Adrenal gland (tissue), 19 donors: ENCODE measurements at regions of chr5 and their contacts with region 1.

Region 1: DNA sequence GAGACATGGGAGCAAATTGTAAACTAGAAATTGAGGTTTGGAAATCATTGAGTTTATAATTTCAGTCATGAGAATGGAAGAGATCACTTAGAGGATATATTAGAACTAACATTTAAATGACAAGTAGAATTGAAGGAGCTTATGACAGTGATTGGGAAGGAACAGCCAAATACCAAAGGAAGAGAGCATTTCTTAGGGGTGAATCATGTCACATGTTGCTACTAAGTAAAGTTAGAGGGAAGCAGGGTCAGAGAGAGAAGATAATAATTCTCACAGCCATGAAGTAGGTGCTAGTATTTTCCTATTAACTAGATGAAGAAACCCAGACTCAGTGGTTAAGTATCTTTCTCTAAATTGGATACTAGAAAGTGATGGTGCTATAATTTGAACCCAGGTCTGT is 59.3 kb downstream of the COMMD10 start:
- DNase-seq: no peak
- H3K4me3 ChIP-seq: no peak overlapping the region
- H3K27ac ChIP-seq: no peak overlapping the region
- H3K4me1 ChIP-seq: no peaks in the 10 kb centered on the region
- H3K27me3 ChIP-seq: no peaks in the 10 kb centered on the region
- CTCF ChIP-seq: no peak
- POLR2A ChIP-seq: no peak

Region 2: GRCh38 chr5:115946655-115947054 is 197.4 kb before region 1 on chr5:
- intact Hi-C with region 1: no loop called
- DNase-seq: no peak
- H3K4me3 ChIP-seq: no peak overlapping the region
- H3K27ac ChIP-seq: no peak overlapping the region
- H3K4me1 ChIP-seq: no peaks in the 10 kb centered on the region
- H3K27me3 ChIP-seq: no peaks in the 10 kb centered on the region
- CTCF ChIP-seq: no peak
- POLR2A ChIP-seq: no peak

Region 3: GRCh38 chr5:116068028-116068632 is 76.0 kb before region 1 on chr5:
- intact Hi-C with region 1: no loop called
- DNase-seq: peak in 4 of 7 donors; percentile 39 to 69 (median 50)
- H3K4me3 ChIP-seq: no peak overlapping the region
- H3K27ac ChIP-seq: no peak overlapping the region
- H3K4me1 ChIP-seq: no peaks in the 10 kb centered on the region
- H3K27me3 ChIP-seq: peaks cover 6% of the 10 kb centered on the region
- CTCF ChIP-seq: peak; percentile 69 to 94 (median 84)
- POLR2A ChIP-seq: no peak

Region 4: DNA sequence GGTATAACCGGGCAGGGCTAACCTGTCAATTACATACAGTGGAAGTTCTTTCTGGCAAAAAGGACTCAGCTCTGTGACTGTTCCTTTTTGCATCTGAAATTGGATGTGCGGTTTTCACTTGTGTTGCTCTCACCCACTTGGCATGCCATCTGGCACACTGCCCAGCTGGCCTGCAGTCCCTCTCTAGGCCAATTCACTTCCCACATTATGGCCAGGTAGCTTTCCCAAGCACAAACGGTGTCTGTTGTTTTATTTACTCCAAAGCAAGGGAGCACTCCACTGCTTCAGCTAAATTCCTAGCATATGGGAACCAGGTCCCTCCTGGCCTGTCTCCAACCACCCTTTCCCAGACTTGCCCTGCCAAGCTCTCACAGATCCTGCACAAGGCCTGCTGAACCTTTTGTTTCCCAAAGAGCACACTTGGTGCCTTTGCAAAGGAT is 298.0 kb after region 1 on chr5:
- intact Hi-C with region 1: loop called in 1 of 2 experiments (anchors 10 kb)
- DNase-seq: peak; percentile 38 to 74 (median 58)
- H3K4me3 ChIP-seq: no peak overlapping the region
- H3K27ac ChIP-seq: no peak overlapping the region
- H3K4me1 ChIP-seq: peaks cover 0 to 6% of the 10 kb centered on the region in 2 donors
- H3K27me3 ChIP-seq: no peaks in the 10 kb centered on the region
- CTCF ChIP-seq: no peak
- POLR2A ChIP-seq: no peak